Right ventricle myocardium superior (tissue), 1 donor: ENCODE measurements at regions of chr7 and their contacts with region 1.

Region 1: GRCh38 chr7:45923290-45923689 is 2.2 kb upstream of the IGFBP3 start:
- DNase-seq: peak; percentile 83
- ATAC-seq: peak; percentile 68

Region 2: GRCh38 chr7:46352004-46352954 is 429.0 kb after region 1 on chr7:
- intact Hi-C with region 1: loop called (anchors 2 kb)
- DNase-seq: no peak
- ATAC-seq: peak; percentile 73

Region 3: DNA sequence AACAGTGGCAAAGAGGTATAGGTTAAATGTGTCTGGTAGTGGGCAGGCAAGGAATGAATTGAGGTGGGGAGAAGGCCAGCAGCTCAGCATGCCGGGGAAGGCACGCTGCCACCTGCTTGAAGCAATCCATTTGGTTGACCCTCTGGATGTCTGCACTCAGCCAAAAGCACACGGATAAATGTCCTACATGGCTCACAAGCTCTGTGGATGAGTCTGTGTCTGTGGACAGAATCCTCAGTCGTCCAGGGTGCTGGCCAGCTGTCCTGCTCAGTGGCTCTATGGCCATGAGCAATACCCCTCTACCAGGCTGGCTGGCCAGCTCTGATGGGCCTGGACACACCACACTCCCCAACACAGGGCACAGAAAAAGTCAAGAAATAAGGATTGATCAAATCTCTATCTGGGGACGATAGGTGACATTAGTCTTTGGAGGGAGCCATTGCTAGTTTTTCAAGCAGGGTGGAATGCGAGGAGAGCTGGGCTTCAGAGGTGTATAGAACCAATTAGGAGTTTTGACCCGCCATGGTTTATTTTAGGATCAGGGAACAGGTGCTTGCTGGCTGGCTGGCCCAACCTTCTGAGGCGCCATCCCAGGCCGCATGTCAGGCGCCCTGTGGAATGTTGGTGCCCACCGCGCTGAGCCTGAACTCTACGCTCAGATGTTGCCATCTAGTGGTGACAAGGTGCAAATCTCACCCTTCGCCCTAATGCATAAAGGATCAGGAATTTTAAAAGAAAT is 1165.2 kb after region 1 on chr7:
- intact Hi-C with region 1: loop called (anchors 5 kb)
- DNase-seq: peak; percentile 72
- ATAC-seq: peak; percentile 94

Region 4: DNA sequence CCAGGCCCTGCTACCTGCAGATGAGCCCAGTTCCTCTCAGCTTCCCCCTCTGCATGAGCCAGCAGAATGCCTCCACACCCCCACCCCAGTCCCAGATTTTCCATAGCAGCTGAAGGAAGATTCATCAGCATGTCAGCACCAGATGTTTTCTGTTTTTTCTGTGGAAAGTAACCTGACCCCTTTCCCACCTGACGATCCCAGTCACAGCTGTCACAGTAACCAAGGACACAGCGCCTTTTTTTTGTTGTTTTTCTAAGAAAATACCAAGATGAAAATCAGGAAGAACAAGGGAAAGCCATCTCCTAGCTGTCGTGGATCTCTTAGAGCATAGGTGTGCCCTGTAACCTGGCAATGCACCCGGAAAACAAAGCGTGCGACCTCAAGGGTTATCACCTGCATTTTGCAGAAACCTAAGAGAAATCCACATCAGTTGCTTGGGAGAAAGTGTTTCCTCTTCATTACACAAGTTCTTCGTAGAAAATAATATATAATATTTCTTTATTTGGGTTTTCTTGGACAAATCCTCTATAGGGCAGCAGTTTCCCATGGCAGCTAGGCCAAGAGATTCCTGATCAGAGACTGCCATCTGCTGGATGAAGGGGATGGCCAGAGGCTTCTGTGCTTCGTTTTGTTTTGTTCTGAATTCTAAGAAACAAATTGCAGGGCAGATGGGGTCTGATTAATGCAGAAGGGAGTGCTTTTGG is 1256.7 kb after region 1 on chr7:
- intact Hi-C with region 1: loop called (anchors 2 kb)
- DNase-seq: no peak
- ATAC-seq: peak; percentile 55

Region 5: DNA sequence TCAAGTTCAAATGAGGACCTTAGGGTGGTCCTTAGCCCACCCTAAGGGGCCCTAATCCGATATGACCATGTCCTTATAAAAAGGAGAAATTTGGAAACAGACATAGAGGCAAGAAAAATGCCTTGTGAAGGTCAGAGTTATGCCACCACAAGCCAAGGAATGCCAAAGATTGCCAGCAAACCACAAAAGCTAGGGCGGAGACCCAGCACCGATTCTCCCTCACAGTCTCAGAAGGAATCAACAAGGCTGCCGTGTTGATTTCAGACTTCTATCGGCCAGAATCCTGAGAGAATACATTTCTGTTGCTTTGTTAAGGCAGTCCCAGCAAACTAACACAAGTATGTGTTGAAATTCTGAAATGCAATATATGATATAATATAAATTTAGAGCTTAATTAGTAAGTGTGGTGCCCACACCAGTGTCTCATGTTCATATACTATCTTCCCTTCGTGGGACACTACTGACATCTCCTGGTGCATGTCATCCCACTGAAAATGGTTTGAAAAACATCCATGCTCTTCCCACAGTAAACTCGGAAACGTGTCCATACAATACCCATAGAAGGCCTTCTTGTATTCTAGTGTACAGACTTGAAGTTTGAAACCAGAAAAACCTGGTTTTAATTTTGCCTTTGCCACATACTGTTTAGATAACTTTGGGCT is 1309.6 kb after region 1 on chr7:
- intact Hi-C with region 1: loop called (anchors 10 kb)
- DNase-seq: no peak
- ATAC-seq: peak; percentile 54